ENCODE measurements at regions of chr2 and their contacts with region 1.

Region 1: DNA sequence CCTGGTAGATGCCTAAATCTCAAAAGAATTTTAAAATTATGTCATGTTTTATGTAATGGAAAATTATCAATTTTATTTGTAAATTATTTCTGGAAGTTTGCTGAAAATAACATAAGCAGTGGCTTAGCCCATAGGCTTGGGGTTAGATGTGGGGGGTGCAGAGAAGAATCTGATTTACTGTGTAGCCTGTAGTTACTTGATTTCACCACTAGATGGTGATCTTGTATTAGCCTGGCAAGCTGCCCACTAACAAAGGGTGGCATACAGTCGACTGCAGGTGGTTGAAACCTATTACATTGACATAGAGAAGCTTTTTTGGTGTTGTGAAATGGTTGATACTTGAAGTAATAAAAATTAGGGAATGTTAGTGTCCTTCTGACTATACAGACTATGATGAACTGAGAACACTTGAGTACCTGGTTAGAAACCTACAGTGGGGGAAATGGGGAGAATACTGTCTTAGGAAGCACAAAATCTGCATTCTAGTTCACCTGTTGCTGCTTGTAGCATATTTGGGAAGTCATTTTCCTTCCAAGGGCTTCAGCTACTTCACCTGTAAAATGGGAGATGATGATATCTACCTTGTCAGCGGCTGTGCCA is 191.0 kb upstream of the LHCGR start:
- DNase-seq: peak; percentile 23
- ATAC-seq: peak; percentile 80
- H3K4me3 ChIP-seq: no peak overlapping the region
- H3K27ac ChIP-seq: no peak overlapping the region
- H3K4me1 ChIP-seq: no peaks in the 10 kb centered on the region
- H3K27me3 ChIP-seq: peaks cover 6% of the 10 kb centered on the region; the same call in 1 of the 2 replicates
- CTCF ChIP-seq: peak; percentile 63 to 83 (median 69)
- POLR2A ChIP-seq: no peak
- RAD21 ChIP-seq: peak; percentile 79

Region 2: DNA sequence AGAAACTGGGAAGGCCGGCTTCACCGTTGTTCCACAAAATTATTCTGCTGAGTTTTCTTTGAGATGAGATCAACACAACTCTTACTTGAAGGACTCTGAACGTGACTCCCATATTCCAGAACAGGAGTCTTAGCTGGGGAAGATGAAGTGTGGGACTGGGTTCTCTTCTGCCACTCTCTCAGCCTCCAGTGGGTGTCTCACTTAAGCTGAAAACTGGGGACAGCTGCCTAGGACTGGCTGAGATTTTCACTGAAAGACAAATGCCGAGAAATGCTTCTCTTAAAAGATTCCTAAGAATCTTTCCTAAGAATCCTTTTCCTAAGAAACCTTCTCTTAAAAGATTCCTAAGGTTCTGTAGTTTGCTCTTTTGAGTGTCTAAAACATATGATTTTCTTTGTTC is 34.4 kb before region 1 on chr2:
- CTCF ChIA-PET with region 1: no interaction called
- POLR2A ChIA-PET with region 1: no interaction called
- RAD21 ChIA-PET with region 1: no interaction called
- intact Hi-C with region 1: no loop called
- DNase-seq: no peak
- ATAC-seq: peak; percentile 47; the same call in 1 of the 2 replicates
- H3K4me3 ChIP-seq: no peak overlapping the region
- H3K27ac ChIP-seq: no peak overlapping the region
- H3K4me1 ChIP-seq: no peaks in the 10 kb centered on the region
- H3K27me3 ChIP-seq: peaks cover 16% of the 10 kb centered on the region
- CTCF ChIP-seq: 0 out of 6 replicates have a peak, but pooled peaks of 1 of the 3 experiments have one; percentile 14
- POLR2A ChIP-seq: no peak
- RAD21 ChIP-seq: no peak

Region 3: GRCh38 chr2:50401772-50402653 is 1455.5 kb after region 1 on chr2:
- CTCF ChIA-PET with region 1: interaction called, 13 read pairs
- POLR2A ChIA-PET with region 1: no interaction called
- RAD21 ChIA-PET with region 1: interaction called in 1 of 2 experiments, 6 read pairs
- intact Hi-C with region 1: loop called (anchors 1 kb)
- DNase-seq: peak; percentile 56
- ATAC-seq: peak; percentile 64
- H3K4me3 ChIP-seq: no peak overlapping the region
- H3K27ac ChIP-seq: no peak overlapping the region
- H3K4me1 ChIP-seq: no peaks in the 10 kb centered on the region
- H3K27me3 ChIP-seq: peaks cover 8% of the 10 kb centered on the region; the same call in 1 of the 2 replicates
- CTCF ChIP-seq: peak; percentile 54 to 98 (median 90); a peak in 5 of 6 replicates
- POLR2A ChIP-seq: no peak
- RAD21 ChIP-seq: peak; percentile 81

Region 4: DNA sequence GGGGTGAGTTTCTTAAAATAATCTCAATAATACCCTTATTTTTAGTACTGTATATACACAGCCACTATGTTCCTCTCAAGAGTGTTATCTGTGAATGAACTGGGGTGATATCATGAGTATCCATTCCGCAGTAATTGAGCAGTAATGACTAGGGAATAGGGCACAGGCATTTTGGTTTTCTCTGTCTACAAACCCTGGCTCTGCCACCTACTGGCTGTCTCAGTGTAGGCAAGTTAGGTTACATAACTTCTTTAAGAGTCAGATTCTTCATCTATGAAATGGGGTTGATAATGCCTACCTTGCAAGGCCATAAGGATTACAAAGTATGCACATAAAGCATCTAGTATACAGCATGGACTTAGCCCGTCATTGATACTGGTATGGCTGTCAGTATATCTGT is 1529.6 kb after region 1 on chr2:
- CTCF ChIA-PET with region 1: no interaction called
- POLR2A ChIA-PET with region 1: no interaction called
- RAD21 ChIA-PET with region 1: no interaction called
- intact Hi-C with region 1: loop called (anchors 5 kb)
- DNase-seq: no peak
- ATAC-seq: peak; percentile 34; the same call in 1 of the 2 replicates
- H3K4me3 ChIP-seq: no peak overlapping the region
- H3K27ac ChIP-seq: no peak overlapping the region
- H3K4me1 ChIP-seq: no peaks in the 10 kb centered on the region
- H3K27me3 ChIP-seq: 0 out of 2 replicates have a peak, but pooled peaks cover 4% of the 10 kb centered on the region
- CTCF ChIP-seq: peak in 2 of 3 experiments; percentile 45 to 46; a peak in 4 of 6 replicates
- POLR2A ChIP-seq: no peak
- RAD21 ChIP-seq: no peak; the same call in 1 of the 2 replicates

Region 5: DNA sequence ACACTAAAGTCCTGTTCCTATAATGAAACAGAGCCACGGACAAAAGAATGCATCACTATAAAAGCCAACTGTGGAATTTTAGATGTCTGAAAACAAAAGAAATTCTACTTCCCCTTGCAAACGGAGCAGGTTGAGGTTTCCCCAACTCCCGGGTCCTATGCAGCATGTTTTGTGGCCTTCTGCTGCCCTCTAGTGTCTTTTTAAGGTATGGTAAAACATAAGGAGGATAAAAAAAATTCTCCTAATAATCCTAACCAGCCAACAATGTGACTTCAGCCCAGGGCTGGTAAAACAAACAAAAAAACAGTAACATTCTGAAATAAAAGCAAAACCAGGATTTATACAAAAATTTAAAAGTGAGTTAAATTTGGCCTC is 1545.9 kb after region 1 on chr2:
- CTCF ChIA-PET with region 1: interaction called, 6 read pairs
- POLR2A ChIA-PET with region 1: no interaction called
- RAD21 ChIA-PET with region 1: no interaction called
- intact Hi-C with region 1: loop called (anchors 1 kb)
- DNase-seq: peak; percentile 35
- ATAC-seq: peak; percentile 82
- H3K4me3 ChIP-seq: no peak overlapping the region
- H3K27ac ChIP-seq: no peak overlapping the region
- H3K4me1 ChIP-seq: no peaks in the 10 kb centered on the region
- H3K27me3 ChIP-seq: no peaks in the 10 kb centered on the region
- CTCF ChIP-seq: peak; percentile 51 to 72 (median 66); a peak in 5 of 6 replicates
- POLR2A ChIP-seq: no peak
- RAD21 ChIP-seq: peak; percentile 73

Measured in HCT116 (cell line).